Heart right ventricle (tissue), 16 donors: ENCODE measurements at regions of chr1 and their contacts with region 1.

Region 1: GRCh38 chr1:109586055-109586454 is 33.4 kb downstream of the GNAT2 start:
- DNase-seq: no peak
- ATAC-seq: no peak
- H3K4me3 ChIP-seq: no peak overlapping the region
- H3K27ac ChIP-seq: no peak overlapping the region
- H3K4me1 ChIP-seq: no peaks in the 10 kb centered on the region
- H3K27me3 ChIP-seq: no peaks in the 10 kb centered on the region
- CTCF ChIP-seq: no peak

Region 2: GRCh38 chr1:109630081-109630897 is 44.2 kb after region 1 on chr1:
- intact Hi-C with region 1: loop called in 1 of 10 experiments (anchors 2 kb)
- DNase-seq: no peak
- ATAC-seq: peak in 1 of 8 donors; percentile 11
- H3K4me3 ChIP-seq: no peak overlapping the region
- H3K27ac ChIP-seq: no peak overlapping the region
- H3K4me1 ChIP-seq: peaks cover 0 to 16% (median 0%) of the 10 kb centered on the region in 9 donors
- H3K27me3 ChIP-seq: no peaks in the 10 kb centered on the region
- CTCF ChIP-seq: peak; percentile 14 to 50 (median 36)